AG04449 (cell line): ENCODE measurements at regions of chr1 and their contacts with region 1.

Region 1: GRCh38 chr1:209576798-209577197 is 6.7 kb upstream of the CAMK1G start:
- DNase-seq: no peak
- H3K4me3 ChIP-seq: no peak overlapping the region
- CTCF ChIP-seq: peak; percentile 96

Region 2: GRCh38 chr1:209517681-209518050 is 59.1 kb before region 1 on chr1:
- CTCF ChIA-PET with region 1: no interaction called
- POLR2A ChIA-PET with region 1: no interaction called
- DNase-seq: no peak
- H3K4me3 ChIP-seq: no peak overlapping the region
- CTCF ChIP-seq: no peak

Region 3: GRCh38 chr1:209674957-209675564 is 98.3 kb after region 1 on chr1 and contains the start of gene G0S2:
- CTCF ChIA-PET with region 1: interaction called, 18 read pairs
- POLR2A ChIA-PET with region 1: no interaction called
- DNase-seq: no peak
- H3K4me3 ChIP-seq: peak within 1 kb of the TSS; percentile 58
- CTCF ChIP-seq: no peak